Activated CD8-positive, alpha-beta T cell treated with anti-CD3 and anti-CD28 coated beads for 36 hours (primary cell): ENCODE measurements at regions of chr2 and their contacts with region 1.

Region 1: DNA sequence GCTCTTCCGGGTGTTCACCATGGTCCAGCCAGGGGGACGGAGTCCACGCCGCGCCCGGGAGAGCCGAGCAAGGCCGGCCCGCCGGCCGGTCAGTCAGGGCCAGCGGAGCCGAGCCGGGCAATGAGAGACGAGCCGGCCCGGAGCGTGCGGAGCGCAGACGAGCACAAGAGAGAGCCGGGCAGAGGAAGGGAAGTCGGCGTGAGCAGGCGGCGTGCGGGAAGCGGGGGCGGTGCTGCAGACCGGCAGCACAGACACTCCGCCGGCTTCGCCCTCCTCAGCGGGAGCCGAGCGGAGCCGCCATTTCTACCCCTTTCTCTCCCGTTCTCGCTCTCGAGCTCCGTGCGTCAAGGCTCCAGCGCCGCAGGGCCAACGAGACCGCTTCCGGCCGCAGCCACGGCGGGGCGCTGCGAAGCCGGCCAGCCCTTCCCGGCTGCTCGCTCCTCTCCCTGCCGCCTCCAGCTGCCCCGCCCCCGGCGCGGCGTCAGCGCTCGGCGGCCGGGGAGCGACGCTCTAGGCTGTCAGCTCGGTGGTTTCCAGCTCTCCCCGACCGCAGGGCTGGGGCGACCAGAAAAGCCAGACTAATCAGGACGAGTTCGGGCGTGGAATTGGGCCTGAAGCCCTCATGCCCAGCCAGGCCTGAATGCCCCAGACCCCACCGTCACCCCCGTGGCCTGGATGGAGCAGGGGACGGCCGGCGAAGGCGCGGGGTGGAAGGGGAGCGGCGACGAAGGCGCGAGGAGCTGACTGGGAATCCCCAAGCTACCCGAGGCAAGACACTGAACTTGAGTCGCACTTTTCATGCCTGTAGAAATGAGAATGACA is at the start of gene ATAD2B:
- DNase-seq: peak; percentile 94
- ATAC-seq: peak; percentile 88
- H3K4me3 Mint-ChIP-seq: peak within 1 kb of the TSS; percentile 95
- H3K27ac Mint-ChIP-seq: peak within 1 kb of the TSS; percentile 99
- H3K4me1 Mint-ChIP-seq: peaks cover 42% of the 10 kb centered on the region
- H3K27me3 Mint-ChIP-seq: no peaks in the 10 kb centered on the region
- CTCF ChIP-seq: peak; percentile 67
- total RNA-seq, gene ATAD2B: 12.5 to 13.2 TPM

Region 2: DNA sequence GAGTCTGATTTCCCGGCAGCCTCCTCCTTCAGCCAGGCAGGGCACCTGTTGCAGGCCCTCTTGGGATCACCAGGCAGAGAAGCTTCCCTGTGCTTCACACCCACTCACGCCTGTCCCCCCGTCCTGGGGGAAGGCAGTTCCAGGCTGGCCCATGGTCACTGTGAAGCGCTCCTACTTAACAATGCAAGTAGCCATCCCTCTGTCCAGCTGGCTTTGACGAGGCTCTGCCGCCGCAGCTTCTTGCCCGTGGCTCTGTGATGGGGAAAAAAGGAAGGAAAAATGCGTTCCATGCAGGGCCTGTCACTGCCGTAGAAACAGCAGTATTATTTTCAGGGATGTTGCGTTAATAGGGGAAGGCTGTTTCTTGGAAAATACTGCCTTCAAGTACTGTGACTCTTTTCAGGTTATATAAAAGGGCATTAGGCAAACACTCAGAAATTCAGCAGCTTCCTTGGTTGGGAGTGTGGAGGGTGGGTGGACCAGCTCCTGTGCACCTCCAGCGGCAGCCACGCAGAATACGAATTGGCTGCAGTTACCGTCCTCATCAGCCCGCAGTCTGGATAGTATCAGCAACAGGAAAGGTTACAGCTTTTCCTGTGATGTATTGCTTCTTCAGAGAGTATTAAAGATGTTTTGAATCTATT is 309.7 kb before region 1 on chr2:
- CTCF ChIA-PET with region 1: no interaction called
- POLR2A ChIA-PET with region 1: no interaction called
- intact Hi-C with region 1: no loop called
- DNase-seq: no peak
- ATAC-seq: no peak
- H3K4me3 Mint-ChIP-seq: no peak overlapping the region
- H3K27ac Mint-ChIP-seq: no peak overlapping the region
- H3K4me1 Mint-ChIP-seq: peaks cover 13% of the 10 kb centered on the region
- H3K27me3 Mint-ChIP-seq: no peaks in the 10 kb centered on the region
- CTCF ChIP-seq: no peak

Region 3: DNA sequence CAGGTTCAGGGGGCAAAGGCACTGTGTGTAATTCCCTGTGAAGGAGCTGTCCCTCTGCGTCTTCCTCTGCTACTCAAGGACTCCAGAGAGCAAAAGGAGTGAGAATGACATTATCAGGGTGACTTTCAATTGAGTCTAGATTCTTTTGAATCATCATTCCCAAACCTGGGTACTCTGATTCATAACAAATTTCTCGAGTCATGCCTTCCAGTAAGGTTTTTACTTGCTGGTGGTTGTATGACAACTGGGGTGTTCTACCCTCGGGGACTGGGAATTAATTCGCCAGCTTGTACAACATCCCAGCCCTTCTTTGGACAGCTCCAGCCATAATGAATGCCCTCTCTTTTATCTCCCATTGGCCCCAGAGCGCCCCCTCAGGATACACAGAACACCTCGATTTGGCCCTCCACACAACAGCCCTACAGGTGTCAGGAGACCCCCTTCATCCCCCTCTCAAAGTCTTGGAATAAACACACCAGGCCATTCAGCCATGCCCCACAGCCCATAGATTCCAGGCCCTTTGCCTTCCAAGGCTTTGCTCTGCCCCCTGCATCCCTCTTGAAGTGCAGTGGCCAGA is 287.5 kb before region 1 on chr2:
- CTCF ChIA-PET with region 1: no interaction called
- POLR2A ChIA-PET with region 1: no interaction called
- intact Hi-C with region 1: no loop called
- DNase-seq: no peak
- ATAC-seq: no peak
- H3K4me3 Mint-ChIP-seq: no peak overlapping the region
- H3K27ac Mint-ChIP-seq: no peak overlapping the region
- H3K4me1 Mint-ChIP-seq: no peaks in the 10 kb centered on the region
- H3K27me3 Mint-ChIP-seq: no peaks in the 10 kb centered on the region
- CTCF ChIP-seq: no peak

Region 4: DNA sequence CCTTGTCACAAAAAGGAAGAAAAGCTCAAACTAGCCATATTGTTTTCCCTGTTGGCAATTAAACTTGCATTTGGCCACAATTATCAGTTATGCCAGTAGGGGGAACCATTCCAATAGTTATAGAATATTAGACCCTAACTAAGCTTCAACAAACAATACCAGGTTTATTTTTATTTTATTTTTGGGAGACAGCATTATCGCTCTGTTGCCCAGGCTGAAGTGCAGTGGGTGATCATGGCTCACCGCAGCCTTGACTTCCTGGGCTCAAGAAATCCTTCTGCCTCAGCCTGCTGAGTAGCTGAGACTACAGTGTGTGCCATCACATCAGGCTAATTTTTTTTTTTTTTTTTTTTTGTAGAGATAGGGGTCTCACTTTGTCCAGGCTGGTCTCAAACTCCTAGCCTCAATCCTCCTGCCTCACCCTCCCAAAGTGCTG is 102.2 kb before region 1 on chr2:
- CTCF ChIA-PET with region 1: interaction called, 39 read pairs
- POLR2A ChIA-PET with region 1: interaction called, 5 read pairs
- intact Hi-C with region 1: no loop called
- DNase-seq: peak; percentile 22
- ATAC-seq: peak; percentile 61
- H3K4me3 Mint-ChIP-seq: no peak overlapping the region
- H3K27ac Mint-ChIP-seq: no peak overlapping the region
- H3K4me1 Mint-ChIP-seq: peaks cover 15% of the 10 kb centered on the region
- H3K27me3 Mint-ChIP-seq: no peaks in the 10 kb centered on the region
- CTCF ChIP-seq: peak; percentile 85

Region 5: DNA sequence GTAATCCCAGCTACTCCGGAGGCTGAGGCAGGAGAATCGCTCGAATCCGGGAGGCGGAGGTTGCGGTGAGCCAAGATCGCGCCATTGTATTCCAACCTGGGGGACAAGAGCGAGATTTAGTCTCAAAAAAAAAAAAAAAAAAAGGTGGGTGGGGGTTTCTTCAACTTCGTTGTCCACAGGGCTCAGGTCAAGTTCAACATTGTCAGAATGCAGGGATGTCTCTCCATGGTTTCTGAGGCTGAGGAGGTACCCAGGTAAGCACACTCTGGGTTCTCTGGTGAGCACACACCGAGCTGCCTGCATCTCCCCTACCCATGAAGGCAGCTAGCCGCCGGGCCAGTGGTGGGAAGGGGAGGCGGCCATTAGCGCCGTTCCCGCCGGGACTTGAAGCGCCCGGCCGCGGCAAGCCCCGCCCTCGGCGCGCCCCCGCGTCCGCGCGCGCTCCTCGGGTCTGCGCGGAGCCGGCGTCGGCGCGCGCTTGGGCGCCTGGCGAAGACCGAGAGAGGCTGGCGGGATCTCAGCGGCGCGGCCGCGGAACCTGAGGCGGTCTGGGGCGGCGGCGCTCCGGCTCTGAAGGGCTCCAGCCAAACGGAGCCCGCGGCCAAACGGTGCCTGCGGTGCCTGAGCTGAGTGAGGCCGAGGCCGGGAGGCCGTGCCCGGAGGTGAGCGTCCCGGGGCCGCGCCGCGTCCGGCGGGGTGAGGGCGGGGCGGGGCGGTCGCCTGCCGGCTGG is 13.2 kb after region 1 on chr2 and contains the start of gene UBXN2A:
- CTCF ChIA-PET with region 1: interaction called, 74 read pairs
- POLR2A ChIA-PET with region 1: interaction called, 63 read pairs
- intact Hi-C with region 1: no loop called
- DNase-seq: peak; percentile 75
- ATAC-seq: peak; percentile 90
- H3K4me3 Mint-ChIP-seq: peak within 1 kb of the TSS; percentile 98
- H3K27ac Mint-ChIP-seq: peak within 1 kb of the TSS; percentile 90
- H3K4me1 Mint-ChIP-seq: peaks cover 22% of the 10 kb centered on the region
- H3K27me3 Mint-ChIP-seq: peaks cover 9% of the 10 kb centered on the region
- CTCF ChIP-seq: no peak
- total RNA-seq, gene UBXN2A: 11.1 to 11.2 TPM

Region 6: DNA sequence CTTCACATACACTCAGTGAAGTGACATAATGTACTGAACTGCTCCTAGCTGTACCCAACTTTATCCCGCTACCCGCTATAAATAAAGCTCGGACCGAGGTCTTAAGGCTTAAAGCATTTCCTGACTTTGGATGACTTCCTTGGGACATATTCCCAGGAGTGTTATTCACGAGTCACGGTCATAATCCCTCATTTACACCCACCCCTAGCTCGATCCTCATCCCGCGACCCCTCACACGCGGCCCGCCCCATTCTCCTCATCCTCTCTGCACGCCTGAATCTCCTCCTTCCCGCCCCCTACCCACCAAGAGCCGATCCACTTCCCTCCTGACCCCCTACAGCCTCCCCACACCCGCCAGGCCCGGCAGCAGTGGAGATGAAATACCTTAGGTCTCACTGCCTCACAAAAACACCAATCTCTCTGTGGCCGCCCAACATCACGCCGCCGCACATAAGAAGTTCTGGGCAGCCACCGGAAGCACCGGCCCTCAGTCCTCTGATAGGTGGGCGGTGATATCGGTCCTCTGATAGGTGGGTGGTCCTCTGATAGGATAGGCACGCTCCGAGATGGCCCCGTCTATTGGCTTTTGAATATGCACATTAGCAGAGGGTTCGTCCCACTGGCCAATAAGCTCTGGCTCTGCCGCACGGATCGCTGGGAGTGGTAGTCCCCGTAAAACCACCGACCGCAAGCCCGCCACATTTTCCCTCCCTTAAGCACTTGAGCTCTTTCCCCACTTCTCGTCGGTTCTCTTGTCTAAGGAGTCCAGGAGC is 120.2 kb after region 1 on chr2 and contains the start of gene WDCP:
- CTCF ChIA-PET with region 1: interaction called, 4 read pairs
- POLR2A ChIA-PET with region 1: interaction called, 10 read pairs
- intact Hi-C with region 1: no loop called
- DNase-seq: peak; percentile 99
- ATAC-seq: peak; percentile 99
- H3K4me3 Mint-ChIP-seq: peak within 1 kb of the TSS; percentile 96
- H3K27ac Mint-ChIP-seq: peak within 1 kb of the TSS; percentile 90
- H3K4me1 Mint-ChIP-seq: peaks cover 25% of the 10 kb centered on the region
- H3K27me3 Mint-ChIP-seq: no peaks in the 10 kb centered on the region
- CTCF ChIP-seq: no peak
- total RNA-seq, gene WDCP: 20.2 to 23.0 TPM

Region 7: DNA sequence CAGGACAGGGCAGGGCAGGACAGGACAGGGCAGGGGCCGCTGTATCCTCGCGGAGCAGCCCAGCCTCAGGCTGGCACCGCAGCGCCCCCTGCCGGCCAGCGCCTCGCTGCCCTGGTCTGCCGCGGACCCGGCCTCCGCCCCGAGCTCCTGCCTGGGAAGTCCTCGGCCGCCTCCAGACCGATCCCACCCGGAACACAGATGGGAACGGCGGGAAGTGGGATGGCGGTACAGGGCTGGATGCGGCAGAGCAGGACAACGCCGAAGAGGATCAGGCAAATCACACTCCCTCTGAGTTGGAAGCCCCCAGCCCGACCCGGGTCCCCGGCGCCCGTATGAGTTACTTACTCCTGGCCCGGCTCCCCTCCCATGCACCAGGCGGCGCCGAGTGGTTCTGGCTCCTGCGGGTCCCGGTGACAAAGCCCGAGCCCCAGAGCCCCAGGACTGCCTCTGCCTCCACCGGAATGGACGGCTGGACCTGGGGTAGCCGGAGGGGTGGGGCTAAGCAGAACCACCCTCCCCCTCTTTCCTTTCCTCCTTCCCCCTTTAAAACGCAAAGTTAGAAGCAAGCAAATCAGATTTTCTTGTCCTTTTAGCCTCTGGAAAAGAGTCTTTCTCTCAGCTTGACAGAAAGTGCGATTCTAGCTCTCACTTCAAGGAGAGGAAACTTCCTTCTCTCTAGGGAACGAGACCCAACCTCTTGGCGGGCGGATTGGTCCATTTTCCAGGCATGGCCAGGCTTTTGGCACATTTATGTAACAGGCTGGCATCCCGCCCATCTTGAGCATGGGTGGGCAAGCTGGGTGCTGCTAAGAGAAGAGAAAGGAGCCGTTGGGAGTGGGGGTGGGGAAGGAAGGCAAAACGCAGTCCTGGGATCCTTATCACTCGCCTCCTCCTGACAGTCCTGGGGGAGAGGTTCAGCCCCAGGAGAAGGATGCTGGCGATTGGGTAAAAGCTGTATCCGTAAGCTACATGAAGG is 157.7 kb after region 1 on chr2 and contains the start of gene TP53I3:
- CTCF ChIA-PET with region 1: interaction called, 36 read pairs
- POLR2A ChIA-PET with region 1: interaction called, 20 read pairs
- intact Hi-C with region 1: loop called (anchors 5 kb)
- DNase-seq: peak; percentile 85
- ATAC-seq: peak; percentile 90
- H3K4me3 Mint-ChIP-seq: peak within 1 kb of the TSS; percentile 84
- H3K27ac Mint-ChIP-seq: peak within 1 kb of the TSS; percentile 79
- H3K4me1 Mint-ChIP-seq: peaks cover 12% of the 10 kb centered on the region
- H3K27me3 Mint-ChIP-seq: no peaks in the 10 kb centered on the region
- CTCF ChIP-seq: peak; percentile 97
- total RNA-seq, gene TP53I3: 1.8 to 2.6 TPM